Activated CD4-positive, alpha-beta memory T cell treated with anti-CD3 and anti-CD28 coated beads, Interleukin-2, amount 10 ng/mL, durations not matched to agents 7 days and 5 days (primary cell): ENCODE measurements at regions of chr17 and their contacts with region 1.

Region 1: GRCh38 chr17:40551879-40552768 is 13.1 kb downstream of the CCR7 start:
- DNase-seq: peak; percentile 15
- H3K4me3 Mint-ChIP-seq: no peak overlapping the region
- H3K27ac Mint-ChIP-seq: no peak overlapping the region
- H3K4me1 Mint-ChIP-seq: peaks cover 57% of the 10 kb centered on the region
- H3K27me3 Mint-ChIP-seq: peaks cover 6% of the 10 kb centered on the region

Region 2: GRCh38 chr17:40362696-40363110 is 189.4 kb before region 1 on chr17:
- CTCF ChIA-PET with region 1: interaction called, 10 read pairs
- POLR2A ChIA-PET with region 1: interaction called, 3 read pairs
- DNase-seq: peak; percentile 90
- H3K4me3 Mint-ChIP-seq: peak overlapping the region; percentile 56
- H3K27ac Mint-ChIP-seq: no peak overlapping the region
- H3K4me1 Mint-ChIP-seq: peaks cover 21% of the 10 kb centered on the region
- H3K27me3 Mint-ChIP-seq: peaks cover 21% of the 10 kb centered on the region

Region 3: GRCh38 chr17:40536295-40537171 is 15.6 kb before region 1 on chr17:
- CTCF ChIA-PET with region 1: interaction called, 266 read pairs
- POLR2A ChIA-PET with region 1: interaction called, 59 read pairs
- DNase-seq: no peak
- H3K4me3 Mint-ChIP-seq: no peak overlapping the region
- H3K27ac Mint-ChIP-seq: no peak overlapping the region
- H3K4me1 Mint-ChIP-seq: peaks cover 73% of the 10 kb centered on the region
- H3K27me3 Mint-ChIP-seq: peaks cover 32% of the 10 kb centered on the region

Region 4: GRCh38 chr17:40564883-40565768 is 13.0 kb after region 1 on chr17 and contains the start of gene CCR7:
- CTCF ChIA-PET with region 1: interaction called, 39 read pairs
- POLR2A ChIA-PET with region 1: interaction called, 56 read pairs
- DNase-seq: peak; percentile 75
- H3K4me3 Mint-ChIP-seq: peak within 1 kb of the TSS; percentile 74
- H3K27ac Mint-ChIP-seq: peak within 1 kb of the TSS; percentile 91
- H3K4me1 Mint-ChIP-seq: peaks cover 62% of the 10 kb centered on the region
- H3K27me3 Mint-ChIP-seq: peaks cover 47% of the 10 kb centered on the region
- total RNA-seq, gene CCR7: 43.3 to 44.6 TPM